A549 (cell line): ENCODE measurements at regions of chr10 and their contacts with region 1.

Region 1: DNA sequence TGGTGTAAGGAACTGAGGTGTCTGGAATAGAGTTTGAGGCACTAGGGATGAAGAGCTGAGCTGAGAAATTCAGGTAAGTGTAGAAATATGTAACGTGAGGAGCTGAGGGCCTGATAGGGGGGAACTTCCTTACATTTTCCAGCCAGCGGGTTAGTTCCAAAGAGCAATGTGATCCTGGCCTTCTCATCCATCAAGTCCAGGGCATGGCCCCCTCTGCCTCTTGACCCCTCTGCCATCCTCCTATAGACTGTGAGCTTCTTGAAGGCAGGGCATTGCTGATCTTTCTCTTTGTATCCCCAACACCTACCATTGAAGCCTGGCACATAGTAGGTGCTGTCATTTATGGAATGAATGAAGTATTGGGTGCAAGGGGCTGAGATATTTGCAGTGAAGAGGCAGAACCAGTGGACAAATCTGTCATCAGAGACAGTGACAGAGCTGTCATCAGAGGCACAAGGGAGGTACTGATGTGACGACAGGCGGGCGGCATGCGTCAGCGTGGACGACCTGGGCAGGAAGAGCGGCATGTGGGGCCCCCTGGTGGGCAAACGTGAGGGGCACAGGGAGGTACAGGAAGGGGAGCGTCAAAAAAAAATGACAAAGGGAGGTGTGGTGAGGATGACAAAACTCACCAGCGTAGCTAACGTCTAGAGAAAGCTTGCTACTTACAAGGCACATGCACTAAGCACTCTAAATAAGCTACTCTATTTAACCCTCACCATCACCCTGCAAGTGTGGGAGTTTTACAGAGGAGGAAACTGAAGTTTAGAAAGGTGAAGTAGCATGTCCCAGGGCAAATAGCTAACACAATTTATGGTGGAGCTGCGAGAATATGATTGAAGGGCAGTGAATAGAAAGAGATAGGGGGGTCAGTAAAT is 5.2 kb upstream of the CAMK2G start:
- DNase-seq: peak; percentile 75 to 89
- ATAC-seq: peak; percentile 87 to 93
- H3K4me3 ChIP-seq: no peak overlapping the region
- H3K27ac ChIP-seq: peak overlapping the region in 1 of 2 experiments; percentile 65; a peak in 3 of 6 replicates
- H3K4me1 ChIP-seq: peaks cover 27% of the 10 kb centered on the region
- CTCF ChIP-seq: peak; percentile 88
- EP300 ChIP-seq: no peak
- POLR2A ChIP-seq: no peak
- RAD21 ChIP-seq: peak; percentile 80

Region 2: GRCh38 chr10:73803680-73804286 is 75.8 kb before region 1 on chr10:
- CTCF ChIA-PET with region 1: no interaction called
- POLR2A ChIA-PET with region 1: no interaction called
- DNase-seq: no peak
- ATAC-seq: no peak
- H3K4me3 ChIP-seq: no peak overlapping the region
- H3K27ac ChIP-seq: no peak overlapping the region
- H3K4me1 ChIP-seq: no peaks in the 10 kb centered on the region
- CTCF ChIP-seq: no peak
- EP300 ChIP-seq: no peak
- POLR2A ChIP-seq: no peak
- RAD21 ChIP-seq: no peak

Region 3: GRCh38 chr10:73848821-73849489 is 30.6 kb before region 1 on chr10:
- CTCF ChIA-PET with region 1: interaction called, 565 read pairs
- POLR2A ChIA-PET with region 1: no interaction called
- DNase-seq: peak; percentile 78 to 94
- ATAC-seq: peak; percentile 92 to 97
- H3K4me3 ChIP-seq: no peak overlapping the region
- H3K27ac ChIP-seq: no peak overlapping the region
- H3K4me1 ChIP-seq: peaks cover 7% of the 10 kb centered on the region; the same call in 1 of the 3 replicates
- CTCF ChIP-seq: peak; percentile 94
- EP300 ChIP-seq: no peak
- POLR2A ChIP-seq: no peak
- RAD21 ChIP-seq: peak; percentile 93 to 97

Region 4: DNA sequence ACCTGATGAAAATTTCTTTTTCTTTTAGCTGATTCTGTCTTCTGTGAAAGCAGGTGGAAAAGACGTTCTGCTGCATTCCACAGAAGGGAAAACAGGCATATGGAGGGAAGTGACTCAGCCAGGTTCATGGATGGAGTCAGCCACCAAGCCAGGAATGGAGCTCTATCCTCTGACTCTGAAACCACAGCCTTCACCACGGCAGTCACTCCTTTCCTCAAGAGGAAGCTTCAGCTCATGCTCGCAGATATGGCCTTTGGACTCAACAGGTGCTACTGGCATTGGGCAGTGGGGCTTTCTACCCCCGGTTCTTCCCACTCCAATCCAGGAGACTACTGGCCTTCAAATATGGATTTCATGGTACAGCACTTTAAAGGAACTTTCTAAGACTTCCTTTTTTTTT is 19.9 kb after region 1 on chr10:
- CTCF ChIA-PET with region 1: interaction called, 162 read pairs
- POLR2A ChIA-PET with region 1: no interaction called
- DNase-seq: no peak
- ATAC-seq: peak; percentile 44 to 58; a peak in 3 of 6 replicates
- H3K4me3 ChIP-seq: no peak overlapping the region
- H3K27ac ChIP-seq: peak overlapping the region; percentile 29 to 96
- H3K4me1 ChIP-seq: peaks cover 51% of the 10 kb centered on the region
- CTCF ChIP-seq: no peak
- EP300 ChIP-seq: no peak
- POLR2A ChIP-seq: no peak
- RAD21 ChIP-seq: no peak

Region 5: GRCh38 chr10:73956476-73957359 is 77.2 kb after region 1 on chr10:
- CTCF ChIA-PET with region 1: interaction called, 936 read pairs
- POLR2A ChIA-PET with region 1: no interaction called
- DNase-seq: no peak
- ATAC-seq: peak; percentile 26 to 57; a peak in 3 of 6 replicates
- H3K4me3 ChIP-seq: no peak overlapping the region
- H3K27ac ChIP-seq: peak overlapping the region; percentile 29 to 30; a peak in 4 of 6 replicates
- H3K4me1 ChIP-seq: peaks cover 13% of the 10 kb centered on the region; the same call in 2 of the 3 replicates
- CTCF ChIP-seq: no peak
- EP300 ChIP-seq: no peak
- POLR2A ChIP-seq: no peak
- RAD21 ChIP-seq: no peak

Region 6: DNA sequence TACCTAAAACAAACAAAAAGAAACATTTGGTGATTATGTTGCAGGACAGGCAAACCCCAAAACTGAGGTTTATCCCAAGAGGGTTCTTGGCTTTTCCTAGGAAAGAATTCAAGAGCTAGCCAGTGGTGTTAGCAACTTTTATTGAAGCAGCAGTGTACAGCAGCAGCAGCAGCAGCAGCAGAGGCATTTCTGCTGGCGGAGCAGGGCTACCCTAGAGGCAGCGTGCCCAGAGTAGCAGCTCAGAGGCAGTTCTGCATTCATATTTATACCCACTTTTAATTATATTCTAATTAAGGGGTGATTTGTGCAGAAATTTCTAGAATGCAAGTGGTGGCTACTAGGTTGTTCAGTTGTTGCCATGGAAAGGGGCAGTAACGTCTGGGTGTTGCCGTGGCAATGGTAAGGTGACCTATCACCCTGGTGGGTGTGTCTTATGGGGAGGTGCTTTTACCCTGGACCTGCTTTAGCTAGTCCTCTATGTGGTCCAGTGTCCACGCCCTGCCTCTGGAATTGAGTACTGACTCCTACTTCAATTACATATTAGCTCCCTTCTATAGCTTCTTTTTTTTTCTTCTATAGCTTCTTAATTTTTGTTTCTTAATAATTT is 172.3 kb after region 1 on chr10:
- CTCF ChIA-PET with region 1: no interaction called
- POLR2A ChIA-PET with region 1: no interaction called
- DNase-seq: peak; percentile 25 to 61
- ATAC-seq: peak; percentile 63 to 68; a peak in 5 of 6 replicates
- H3K4me3 ChIP-seq: no peak overlapping the region
- H3K27ac ChIP-seq: peak overlapping the region; percentile 10 to 37; a peak in 3 of 6 replicates
- H3K4me1 ChIP-seq: peaks cover 88% of the 10 kb centered on the region
- CTCF ChIP-seq: no peak
- EP300 ChIP-seq: no peak
- POLR2A ChIP-seq: no peak
- RAD21 ChIP-seq: no peak

Region 7: GRCh38 chr10:74103560-74104248 is 224.2 kb after region 1 on chr10:
- CTCF ChIA-PET with region 1: interaction called, 21 read pairs
- POLR2A ChIA-PET with region 1: no interaction called
- DNase-seq: peak; percentile 48 to 51
- ATAC-seq: peak in 1 of 2 experiments; percentile 76; a peak in 3 of 6 replicates
- H3K4me3 ChIP-seq: no peak overlapping the region
- H3K27ac ChIP-seq: no peak overlapping the region
- H3K4me1 ChIP-seq: no peaks in the 10 kb centered on the region
- CTCF ChIP-seq: peak; percentile 58
- EP300 ChIP-seq: no peak
- POLR2A ChIP-seq: no peak
- RAD21 ChIP-seq: peak; percentile 59